ENCODE measurements at regions of chr20 and their contacts with region 1.

Region 1: DNA sequence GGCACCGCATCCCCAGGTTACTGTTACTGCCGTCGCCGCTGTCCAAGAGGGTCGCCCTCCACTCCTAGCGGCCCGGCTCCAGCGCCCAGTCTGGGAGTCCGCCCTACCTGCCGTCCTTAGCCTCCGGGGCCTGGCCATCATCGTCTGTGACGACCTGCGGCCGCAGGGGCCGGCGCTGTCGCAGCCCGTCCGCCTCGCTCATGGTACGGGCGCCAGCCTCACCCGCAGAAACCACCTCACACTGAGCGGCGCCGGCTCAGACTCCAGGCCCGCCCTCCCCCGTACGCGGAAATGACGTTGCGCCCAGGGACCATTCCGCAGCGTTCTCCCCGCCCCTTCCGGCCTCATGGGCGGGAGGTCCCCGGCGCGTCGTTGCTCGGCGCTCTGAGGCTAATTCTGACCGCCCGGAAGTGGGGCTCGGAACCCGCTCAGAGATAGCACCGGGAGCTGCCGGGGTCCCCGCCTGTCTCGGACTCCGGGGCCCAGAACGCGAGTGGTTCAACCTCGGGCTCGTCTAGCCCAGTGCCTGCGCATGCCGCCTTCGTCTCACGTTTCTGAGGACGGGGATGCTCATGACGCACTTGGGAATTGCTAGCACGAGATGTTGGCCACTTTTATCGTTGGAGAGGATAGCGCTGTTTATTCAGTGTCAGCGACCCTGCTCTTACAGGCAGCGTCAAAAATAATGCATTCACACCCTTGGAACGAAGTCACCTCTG is at the start of gene APMAP:
- DNase-seq: peak; percentile 99
- ATAC-seq: peak; percentile 80 to 94 (median 86)
- H3K4me3 ChIP-seq: peak within 1 kb of the TSS; percentile 95
- H3K4me3 Mint-ChIP-seq: peak within 1 kb of the TSS; percentile 83
- H3K27ac ChIP-seq: peak within 1 kb of the TSS; percentile 98
- H3K27ac Mint-ChIP-seq: peak within 1 kb of the TSS; percentile 93 to 94
- H3K4me1 ChIP-seq: peaks cover 40% of the 10 kb centered on the region
- H3K4me1 Mint-ChIP-seq: peaks cover 56 to 60% of the 10 kb centered on the region in 2 donors
- H3K27me3 ChIP-seq: no peaks in the 10 kb centered on the region
- H3K27me3 Mint-ChIP-seq: no peaks in the 10 kb centered on the region
- CTCF ChIP-seq: no peak
- total RNA-seq, gene APMAP: 205 to 212 (median 207) TPM

Region 2: GRCh38 chr20:24934101-24934661 is 58.5 kb before region 1 on chr20:
- intact Hi-C with region 1: loop called (anchors 1 kb)
- DNase-seq: no peak
- ATAC-seq: no peak
- H3K4me3 ChIP-seq: no peak overlapping the region
- H3K4me3 Mint-ChIP-seq: no peak overlapping the region
- H3K27ac ChIP-seq: no peak overlapping the region
- H3K27ac Mint-ChIP-seq: no peak overlapping the region
- H3K4me1 ChIP-seq: peaks cover 34% of the 10 kb centered on the region
- H3K4me1 Mint-ChIP-seq: peaks cover 41 to 46% of the 10 kb centered on the region in 2 donors
- H3K27me3 ChIP-seq: no peaks in the 10 kb centered on the region
- H3K27me3 Mint-ChIP-seq: peaks cover 0 to 2% of the 10 kb centered on the region in 2 donors
- CTCF ChIP-seq: no peak

Region 3: GRCh38 chr20:24960302-24960801 is 32.3 kb before region 1 on chr20:
- intact Hi-C with region 1: loop called (anchors 1 kb)
- DNase-seq: peak in 1 of 2 donors; percentile 39
- ATAC-seq: peak in 2 of 3 donors; percentile 2 to 9
- H3K4me3 ChIP-seq: no peak overlapping the region
- H3K4me3 Mint-ChIP-seq: peak overlapping the region; percentile 84
- H3K27ac ChIP-seq: peak overlapping the region; percentile 99
- H3K27ac Mint-ChIP-seq: peak overlapping the region; percentile 98 to 100
- H3K4me1 ChIP-seq: peaks cover 96% of the 10 kb centered on the region
- H3K4me1 Mint-ChIP-seq: peaks cover 90 to 97% of the 10 kb centered on the region in 2 donors
- H3K27me3 ChIP-seq: no peaks in the 10 kb centered on the region
- H3K27me3 Mint-ChIP-seq: no peaks in the 10 kb centered on the region
- CTCF ChIP-seq: no peak

Region 4: DNA sequence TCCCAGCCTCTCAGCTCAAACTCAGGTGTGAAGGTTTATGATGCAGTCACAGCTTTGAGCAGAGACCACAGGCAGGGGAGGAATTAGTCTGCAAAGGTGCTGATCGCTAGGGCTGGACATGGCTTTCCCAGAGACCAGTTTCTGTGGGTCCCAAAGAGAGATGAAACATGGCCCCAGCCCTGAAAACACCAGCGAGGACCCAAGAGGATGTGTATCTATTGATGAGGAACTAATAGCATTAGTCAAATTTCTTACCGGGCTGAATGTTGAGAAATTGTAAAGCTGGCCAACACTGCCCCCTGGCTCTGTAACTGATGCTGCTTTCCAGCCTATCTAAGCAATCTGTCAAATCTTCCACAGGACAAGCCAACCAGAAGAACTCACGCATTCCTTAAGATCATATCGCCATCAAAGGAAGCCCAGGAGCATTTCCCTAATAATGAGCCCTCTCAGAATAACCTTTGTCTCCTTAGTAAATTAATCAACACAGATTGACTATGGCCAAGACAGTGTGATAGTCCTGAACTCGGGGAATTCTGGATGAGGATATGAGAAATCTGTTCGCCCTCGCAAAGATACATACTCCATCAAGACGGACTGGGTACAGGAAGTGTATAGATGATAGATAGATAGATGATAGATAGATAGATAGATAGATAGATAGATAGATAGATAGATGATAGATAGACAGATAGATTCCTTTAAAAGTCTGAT is 73.1 kb after region 1 on chr20:
- intact Hi-C with region 1: loop called (anchors 1 kb)
- DNase-seq: peak; percentile 58 to 86
- ATAC-seq: peak; percentile 68 to 86 (median 83)
- H3K4me3 ChIP-seq: no peak overlapping the region
- H3K4me3 Mint-ChIP-seq: no peak overlapping the region
- H3K27ac ChIP-seq: no peak overlapping the region
- H3K27ac Mint-ChIP-seq: no peak overlapping the region
- H3K4me1 ChIP-seq: peaks cover 7% of the 10 kb centered on the region
- H3K4me1 Mint-ChIP-seq: peaks cover 7 to 11% of the 10 kb centered on the region in 2 donors
- H3K27me3 ChIP-seq: no peaks in the 10 kb centered on the region
- H3K27me3 Mint-ChIP-seq: peaks cover 14 to 21% of the 10 kb centered on the region in 2 donors
- CTCF ChIP-seq: peak; percentile 84

Region 5: DNA sequence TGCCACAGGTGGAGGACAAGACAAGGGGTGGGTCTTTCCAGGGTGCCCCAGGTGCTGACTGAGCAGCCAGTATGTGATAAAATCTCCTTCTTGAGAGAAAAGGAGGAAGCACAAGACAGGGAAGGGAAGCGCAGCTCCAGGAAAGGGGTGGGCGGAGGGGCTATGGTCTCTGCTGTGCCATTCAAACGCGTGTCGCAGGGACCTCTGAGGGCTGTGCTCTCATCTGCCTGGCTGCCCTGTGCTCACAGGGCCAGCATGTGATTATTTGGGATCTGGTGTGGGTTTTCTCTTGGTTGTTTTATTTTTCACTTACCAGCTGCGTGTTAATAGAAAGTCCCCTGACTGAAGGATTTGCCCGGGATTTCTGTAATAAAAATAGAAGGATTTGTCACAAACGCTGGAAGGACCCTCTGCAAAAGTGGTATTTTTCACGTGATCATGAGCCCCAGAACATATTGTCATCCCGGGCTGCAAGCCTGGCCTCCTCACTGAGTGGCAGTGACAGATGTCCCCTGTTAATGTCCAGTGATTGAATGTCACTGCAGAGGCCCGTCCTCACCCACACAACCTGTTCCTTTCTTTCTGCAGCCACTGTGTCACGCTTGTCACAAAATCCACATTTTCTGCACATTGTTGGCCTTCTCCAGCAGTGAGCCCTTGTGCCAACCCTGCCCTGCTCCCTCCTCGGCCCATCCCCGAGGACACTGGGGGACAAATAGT is 124.3 kb after region 1 on chr20:
- intact Hi-C with region 1: no loop called
- DNase-seq: no peak
- ATAC-seq: no peak
- H3K4me3 ChIP-seq: no peak overlapping the region
- H3K4me3 Mint-ChIP-seq: no peak overlapping the region
- H3K27ac ChIP-seq: no peak overlapping the region
- H3K27ac Mint-ChIP-seq: no peak overlapping the region
- H3K4me1 ChIP-seq: no peaks in the 10 kb centered on the region
- H3K4me1 Mint-ChIP-seq: no peaks in the 10 kb centered on the region
- H3K27me3 ChIP-seq: peaks cover 2% of the 10 kb centered on the region
- H3K27me3 Mint-ChIP-seq: peaks cover 6 to 11% of the 10 kb centered on the region in 2 donors
- CTCF ChIP-seq: no peak

Region 6: DNA sequence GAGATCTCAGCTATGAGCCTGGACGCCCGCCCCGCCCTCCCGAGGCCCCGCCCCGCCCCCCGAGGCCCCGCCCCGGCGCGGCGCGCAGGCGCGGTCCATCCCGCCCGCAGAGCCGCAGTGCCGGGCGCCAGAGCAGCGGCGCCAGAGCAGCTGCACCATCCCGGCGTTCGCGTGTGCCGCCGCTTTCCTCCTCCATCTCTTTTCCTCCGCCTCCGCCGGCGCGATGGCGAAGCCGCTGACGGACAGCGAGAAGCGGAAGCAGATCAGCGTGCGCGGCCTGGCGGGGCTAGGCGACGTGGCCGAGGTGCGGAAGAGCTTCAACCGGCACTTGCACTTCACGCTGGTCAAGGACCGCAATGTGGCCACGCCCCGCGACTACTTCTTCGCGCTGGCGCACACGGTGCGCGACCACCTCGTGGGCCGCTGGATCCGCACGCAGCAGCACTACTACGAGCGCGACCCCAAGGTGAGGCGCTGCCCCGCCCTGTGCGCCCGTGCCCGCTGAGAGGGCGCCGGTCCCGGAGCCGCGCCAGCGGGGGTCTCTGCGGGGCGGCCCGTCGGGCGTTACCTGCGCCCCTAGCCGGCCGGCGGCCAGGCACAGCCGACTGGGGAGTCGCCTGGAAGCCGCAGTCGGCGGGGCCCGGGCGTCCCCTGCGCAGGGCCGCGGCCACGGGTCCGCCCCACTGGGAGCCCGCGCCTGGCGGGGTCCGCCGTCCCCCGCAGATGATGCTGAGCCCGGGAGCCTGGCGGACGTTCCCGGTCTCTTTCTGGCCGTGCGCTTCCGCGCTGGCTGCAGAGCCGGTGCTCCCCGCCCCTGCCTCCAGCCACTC is 255.5 kb after region 1 on chr20 and contains the start of gene PYGB:
- intact Hi-C with region 1: loop called (anchors 1 kb)
- DNase-seq: peak; percentile 68 to 89
- ATAC-seq: peak; percentile 89 to 91 (median 90)
- H3K4me3 ChIP-seq: peak within 1 kb of the TSS; percentile 94
- H3K4me3 Mint-ChIP-seq: peak within 1 kb of the TSS; percentile 97
- H3K27ac ChIP-seq: peak within 1 kb of the TSS; percentile 56
- H3K27ac Mint-ChIP-seq: peak within 1 kb of the TSS; percentile 74 to 79
- H3K4me1 ChIP-seq: peaks cover 21% of the 10 kb centered on the region
- H3K4me1 Mint-ChIP-seq: peaks cover 28 to 40% of the 10 kb centered on the region in 2 donors
- H3K27me3 ChIP-seq: no peaks in the 10 kb centered on the region
- H3K27me3 Mint-ChIP-seq: peaks cover 7 to 9% of the 10 kb centered on the region in 2 donors
- CTCF ChIP-seq: no peak
- total RNA-seq, gene PYGB: 39.4 to 55.4 (median 47.0) TPM

Region 7: GRCh38 chr20:25296714-25297093 is 304.1 kb after region 1 on chr20:
- intact Hi-C with region 1: no loop called
- DNase-seq: peak in 1 of 2 donors; percentile 47
- ATAC-seq: peak in 2 of 3 donors; percentile 32 to 34
- H3K4me3 ChIP-seq: no peak overlapping the region
- H3K4me3 Mint-ChIP-seq: no peak overlapping the region
- H3K27ac ChIP-seq: no peak overlapping the region
- H3K27ac Mint-ChIP-seq: no peak overlapping the region
- H3K4me1 ChIP-seq: peaks cover 4% of the 10 kb centered on the region
- H3K4me1 Mint-ChIP-seq: peaks cover 0 to 4% of the 10 kb centered on the region in 2 donors
- H3K27me3 ChIP-seq: no peaks in the 10 kb centered on the region
- H3K27me3 Mint-ChIP-seq: no peaks in the 10 kb centered on the region
- CTCF ChIP-seq: no peak